ENCODE measurements at regions of chr4 and their contacts with region 1.

Region 1: GRCh38 chr4:103008875-103009729 is 10.4 kb downstream of the SLC9B1 start:
- DNase-seq: no peak
- H3K4me3 ChIP-seq: no peak overlapping the region
- H3K27ac ChIP-seq: no peak overlapping the region
- H3K4me1 ChIP-seq: peaks cover 15% of the 10 kb centered on the region
- H3K27me3 ChIP-seq: no peaks in the 10 kb centered on the region
- CTCF ChIP-seq: peak; percentile 89

Region 2: GRCh38 chr4:102449751-102450352 is 559.2 kb before region 1 on chr4:
- intact Hi-C with region 1: loop called (anchors 5 kb)
- DNase-seq: no peak
- H3K4me3 ChIP-seq: no peak overlapping the region
- H3K27ac ChIP-seq: no peak overlapping the region
- H3K4me1 ChIP-seq: no peaks in the 10 kb centered on the region
- H3K27me3 ChIP-seq: no peaks in the 10 kb centered on the region
- CTCF ChIP-seq: peak; percentile 73

Region 3: DNA sequence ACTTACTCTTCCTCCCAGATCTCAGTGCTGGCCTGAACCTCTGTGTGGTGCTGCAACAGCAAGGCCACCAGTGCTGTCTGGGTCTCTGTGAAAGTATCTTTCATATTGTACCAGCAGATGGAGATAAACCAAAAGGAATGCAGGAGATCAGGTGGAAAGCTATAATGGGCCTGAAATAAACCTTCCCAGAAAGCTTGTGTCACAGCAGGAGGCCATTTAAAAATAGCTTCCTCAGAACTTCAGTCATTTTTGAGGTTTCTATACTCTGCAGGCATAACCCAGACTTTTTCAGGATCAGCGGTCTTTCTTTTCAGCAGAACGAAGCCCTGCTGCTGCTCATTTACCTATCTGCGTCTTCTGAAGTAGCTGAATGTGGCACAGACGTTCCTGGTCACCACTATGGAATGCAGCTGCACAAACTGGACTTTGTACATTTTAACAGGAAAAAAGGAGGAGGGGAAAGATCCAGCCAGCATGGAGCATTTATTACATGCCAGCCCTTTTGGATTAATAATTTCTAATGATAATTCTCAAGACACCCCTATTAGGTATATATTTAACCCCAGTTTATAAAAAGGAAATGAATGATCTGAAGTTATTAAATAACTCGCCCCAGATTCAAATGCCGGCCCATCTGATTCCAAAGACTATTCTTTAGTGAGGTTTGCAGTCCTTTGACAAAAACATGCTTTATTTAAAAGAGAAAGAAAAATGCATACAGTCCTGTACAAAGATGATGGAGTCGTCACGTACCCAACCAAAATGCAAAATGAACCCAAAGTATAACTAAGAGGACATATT is 388.2 kb before region 1 on chr4:
- intact Hi-C with region 1: loop called (anchors 5 kb)
- DNase-seq: no peak
- H3K4me3 ChIP-seq: peak overlapping the region; percentile 43
- H3K27ac ChIP-seq: no peak overlapping the region
- H3K4me1 ChIP-seq: peaks cover 10% of the 10 kb centered on the region
- H3K27me3 ChIP-seq: no peaks in the 10 kb centered on the region
- CTCF ChIP-seq: peak; percentile 69

Region 4: GRCh38 chr4:102657206-102657605 is 351.9 kb before region 1 on chr4:
- intact Hi-C with region 1: no loop called
- DNase-seq: no peak
- H3K4me3 ChIP-seq: no peak overlapping the region
- H3K27ac ChIP-seq: no peak overlapping the region
- H3K4me1 ChIP-seq: no peaks in the 10 kb centered on the region
- H3K27me3 ChIP-seq: no peaks in the 10 kb centered on the region
- CTCF ChIP-seq: no peak

Region 5: GRCh38 chr4:102959498-102959897 is 49.6 kb before region 1 on chr4:
- intact Hi-C with region 1: no loop called
- DNase-seq: peak; percentile 32
- H3K4me3 ChIP-seq: no peak overlapping the region
- H3K27ac ChIP-seq: no peak overlapping the region
- H3K4me1 ChIP-seq: peaks cover 10% of the 10 kb centered on the region
- H3K27me3 ChIP-seq: no peaks in the 10 kb centered on the region
- CTCF ChIP-seq: no peak